ENCODE measurements at regions of chr7 and their contacts with region 1.

Region 1: DNA sequence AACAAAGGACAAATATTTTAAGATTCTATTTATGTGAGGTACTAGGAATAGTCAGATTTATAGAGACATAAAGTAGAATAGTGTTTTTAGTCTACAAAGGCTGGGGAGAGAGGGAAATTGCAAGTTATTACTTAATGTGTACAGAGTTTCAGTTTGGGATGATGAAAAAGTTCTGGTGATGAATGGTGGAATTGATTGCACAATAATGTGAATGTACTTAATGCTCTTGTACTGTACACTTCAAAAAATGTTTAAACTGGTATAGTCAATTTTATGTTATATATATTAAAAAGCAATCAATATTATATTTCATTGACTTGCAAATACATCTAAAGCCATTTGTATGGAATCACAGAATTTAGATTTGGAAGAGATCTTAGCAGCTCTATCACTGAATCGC is 213.4 kb downstream of the PPP1R3A start:
- DNase-seq: no peak
- ATAC-seq: no peak

Region 2: GRCh38 chr7:112566442-112567324 is 1138.8 kb before region 1 on chr7:
- intact Hi-C with region 1: loop called (anchors 10 kb)
- DNase-seq: no peak
- ATAC-seq: peak; percentile 88

Region 3: DNA sequence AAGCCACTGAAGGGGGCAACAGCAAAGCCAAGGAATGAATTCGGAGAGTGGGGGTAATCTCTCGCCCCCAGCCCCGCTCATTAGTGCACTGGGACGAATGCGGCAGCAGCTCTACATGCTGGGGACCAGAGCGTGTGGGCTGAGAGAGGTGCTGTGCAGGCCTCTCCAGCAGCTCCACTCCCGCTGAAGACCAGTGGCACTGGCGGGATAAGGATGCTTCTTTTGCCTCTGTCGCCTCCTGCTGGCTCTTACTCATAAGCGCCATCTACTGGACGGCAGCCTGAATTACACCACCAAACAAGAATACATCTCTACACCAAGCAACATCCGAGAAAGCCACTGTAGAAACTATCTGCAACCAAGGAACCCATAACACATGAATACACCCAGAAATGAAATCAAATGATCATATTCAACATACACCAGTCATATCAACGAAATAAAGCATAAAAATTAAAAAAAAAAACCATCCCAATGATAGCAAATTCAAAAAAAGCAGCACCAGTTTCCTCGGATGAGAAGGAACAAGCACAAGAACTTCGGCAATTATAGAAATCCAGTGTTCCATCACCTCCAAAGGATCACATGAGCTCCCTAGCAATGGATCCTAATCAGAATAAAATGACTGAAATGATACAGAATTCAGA is 836.2 kb before region 1 on chr7:
- intact Hi-C with region 1: no loop called
- DNase-seq: no peak
- ATAC-seq: peak; percentile 24

Region 4: DNA sequence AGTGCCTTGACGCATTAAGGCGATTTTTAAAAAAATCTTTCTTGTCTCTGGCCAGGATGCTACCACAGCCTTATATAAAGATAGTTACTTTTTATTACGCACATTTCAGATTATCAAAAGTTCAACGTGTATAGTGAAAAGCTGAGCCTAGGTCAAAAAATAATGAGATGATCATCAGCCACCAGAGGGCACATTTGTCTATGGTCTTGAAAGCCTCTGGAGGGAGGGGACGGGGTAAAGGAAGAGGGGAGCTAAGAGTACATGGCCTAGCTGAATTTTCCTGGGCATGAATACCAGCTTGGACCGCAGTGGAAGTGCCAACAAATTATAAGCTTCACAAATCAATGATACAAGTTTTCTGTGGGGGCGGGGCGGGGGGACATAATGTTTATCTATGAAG is 301.2 kb before region 1 on chr7:
- intact Hi-C with region 1: loop called (anchors 10 kb)
- DNase-seq: no peak
- ATAC-seq: peak; percentile 22

Measured in Right ventricle myocardium superior (tissue), 1 donor.